Activated CD8-positive, alpha-beta T cell treated with anti-CD3 and anti-CD28 coated beads for 36 hours (primary cell): ENCODE measurements at regions of chr11 and their contacts with region 1.

Region 1: GRCh38 chr11:122796128-122796717 is 42.1 kb upstream of the CRTAM start:
- DNase-seq: peak; percentile 88
- ATAC-seq: peak; percentile 100
- H3K4me3 Mint-ChIP-seq: no peak overlapping the region
- H3K27ac Mint-ChIP-seq: no peak overlapping the region
- H3K4me1 Mint-ChIP-seq: peaks cover 2% of the 10 kb centered on the region
- H3K27me3 Mint-ChIP-seq: no peaks in the 10 kb centered on the region
- CTCF ChIP-seq: peak; percentile 95

Region 2: DNA sequence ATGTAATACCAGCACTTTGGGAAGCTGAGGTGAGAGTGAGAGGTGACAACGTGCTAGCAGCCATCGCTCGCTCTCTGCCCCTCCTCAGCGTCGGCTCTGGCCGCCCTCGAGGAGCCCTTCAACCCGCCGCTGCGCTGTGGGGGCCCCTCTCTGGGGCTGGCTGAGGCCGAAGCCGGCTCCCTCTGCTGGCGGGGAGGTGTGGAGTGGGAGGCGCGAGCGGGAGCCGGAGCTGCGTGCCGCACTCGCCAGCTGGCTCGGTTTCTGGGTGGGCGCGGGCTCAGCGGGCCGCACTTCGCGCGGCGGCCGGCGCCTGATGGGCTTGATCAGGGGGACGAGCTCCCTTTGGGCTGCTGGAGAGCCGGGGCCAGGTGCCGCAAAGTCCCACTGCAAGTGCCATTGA is 239.6 kb before region 1 on chr11:
- CTCF ChIA-PET with region 1: no interaction called
- POLR2A ChIA-PET with region 1: no interaction called
- intact Hi-C with region 1: no loop called
- DNase-seq: peak; percentile 19
- ATAC-seq: peak; percentile 37
- H3K4me3 Mint-ChIP-seq: no peak overlapping the region
- H3K27ac Mint-ChIP-seq: no peak overlapping the region
- H3K4me1 Mint-ChIP-seq: no peaks in the 10 kb centered on the region
- H3K27me3 Mint-ChIP-seq: peaks cover 14% of the 10 kb centered on the region
- CTCF ChIP-seq: no peak

Region 3: GRCh38 chr11:122673701-122674100 is 122.5 kb before region 1 on chr11:
- CTCF ChIA-PET with region 1: interaction called, 10 read pairs
- POLR2A ChIA-PET with region 1: no interaction called
- intact Hi-C with region 1: no loop called
- DNase-seq: no peak
- ATAC-seq: no peak
- H3K4me3 Mint-ChIP-seq: no peak overlapping the region
- H3K27ac Mint-ChIP-seq: no peak overlapping the region
- H3K4me1 Mint-ChIP-seq: peaks cover 70% of the 10 kb centered on the region
- H3K27me3 Mint-ChIP-seq: no peaks in the 10 kb centered on the region
- CTCF ChIP-seq: no peak

Region 4: GRCh38 chr11:122808478-122808869 is 12.3 kb after region 1 on chr11:
- CTCF ChIA-PET with region 1: interaction called, 68 read pairs
- POLR2A ChIA-PET with region 1: interaction called, 3 read pairs
- intact Hi-C with region 1: no loop called
- DNase-seq: peak; percentile 56
- ATAC-seq: peak; percentile 49
- H3K4me3 Mint-ChIP-seq: peak overlapping the region; percentile 55
- H3K27ac Mint-ChIP-seq: peak overlapping the region; percentile 76
- H3K4me1 Mint-ChIP-seq: peaks cover 65% of the 10 kb centered on the region
- H3K27me3 Mint-ChIP-seq: no peaks in the 10 kb centered on the region
- CTCF ChIP-seq: no peak

Region 5: DNA sequence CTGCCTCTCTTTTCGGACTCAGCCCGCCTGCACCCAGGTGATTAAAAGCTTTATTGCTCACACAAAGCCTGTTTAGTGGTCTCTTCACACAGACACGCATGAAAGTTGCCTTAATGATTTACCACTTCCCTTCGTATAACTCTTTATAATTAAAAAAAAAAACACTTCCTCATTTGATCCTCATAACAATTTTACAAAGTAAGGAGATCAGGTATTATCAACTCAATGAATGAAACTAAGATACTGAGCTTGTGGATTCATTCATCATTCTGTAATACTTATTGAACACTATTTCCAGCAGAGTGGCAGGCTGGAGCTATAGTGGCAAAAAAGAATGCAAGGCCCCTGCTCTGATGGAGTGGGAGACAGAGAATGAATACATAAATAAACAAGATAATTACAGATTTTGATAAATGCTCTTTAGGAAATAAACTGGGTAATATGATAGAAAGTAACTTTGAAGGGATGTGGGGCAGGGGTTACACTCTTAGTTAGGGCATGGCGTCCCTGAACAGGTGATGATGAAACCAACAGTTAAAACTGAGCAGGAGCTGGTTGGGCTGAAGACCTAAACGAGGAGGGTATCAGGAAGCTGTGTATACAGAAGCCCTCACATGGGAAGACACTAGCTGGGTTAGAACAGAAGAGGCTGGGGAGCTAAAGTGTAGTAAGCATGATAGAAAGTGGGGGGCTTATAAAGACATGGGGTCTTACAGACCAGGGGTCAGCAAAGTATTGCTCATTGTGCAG is 36.7 kb after region 1 on chr11:
- CTCF ChIA-PET with region 1: interaction called, 16 read pairs
- POLR2A ChIA-PET with region 1: no interaction called
- intact Hi-C with region 1: no loop called
- DNase-seq: no peak
- ATAC-seq: peak; percentile 54
- H3K4me3 Mint-ChIP-seq: peak overlapping the region; percentile 7
- H3K27ac Mint-ChIP-seq: peak overlapping the region; percentile 65
- H3K4me1 Mint-ChIP-seq: peaks cover 45% of the 10 kb centered on the region
- H3K27me3 Mint-ChIP-seq: no peaks in the 10 kb centered on the region
- CTCF ChIP-seq: no peak

Region 6: DNA sequence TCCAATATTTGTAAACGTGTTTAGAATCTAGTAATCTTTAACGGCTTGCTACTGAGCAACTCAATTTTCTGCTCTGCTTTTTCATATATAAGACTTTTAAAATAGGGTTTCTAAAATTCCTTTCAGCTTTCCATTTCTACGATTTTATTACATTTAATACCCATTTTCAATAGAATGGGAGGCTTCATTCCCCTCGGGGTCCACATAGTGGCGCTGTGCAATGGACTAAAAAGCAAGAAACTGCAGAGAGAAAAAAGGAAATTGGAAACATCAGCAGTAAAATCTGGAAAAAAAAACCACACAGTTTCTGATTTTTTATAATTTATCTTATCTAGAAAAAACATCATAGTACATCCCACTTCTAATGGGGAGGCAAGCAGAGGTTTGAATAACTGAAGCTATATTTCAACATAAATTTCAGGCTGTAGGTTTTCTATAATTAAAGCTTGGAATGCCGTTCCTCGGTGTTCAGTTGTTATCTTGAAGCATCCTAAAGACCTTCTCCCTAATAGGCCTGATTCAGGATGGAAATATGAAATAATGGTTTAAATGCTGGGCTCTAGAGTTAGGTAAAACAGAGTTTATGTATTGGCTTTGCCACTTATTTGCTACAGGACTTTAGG is 67.6 kb after region 1 on chr11:
- CTCF ChIA-PET with region 1: interaction called, 352 read pairs
- POLR2A ChIA-PET with region 1: interaction called, 3 read pairs
- intact Hi-C with region 1: no loop called
- DNase-seq: peak; percentile 66
- ATAC-seq: no peak
- H3K4me3 Mint-ChIP-seq: no peak overlapping the region
- H3K27ac Mint-ChIP-seq: no peak overlapping the region
- H3K4me1 Mint-ChIP-seq: peaks cover 17% of the 10 kb centered on the region
- H3K27me3 Mint-ChIP-seq: no peaks in the 10 kb centered on the region
- CTCF ChIP-seq: peak; percentile 89